ENCODE measurements at regions of chr3 and their contacts with region 1.

Region 1: GRCh38 chr3:30042274-30042859 is 564.0 kb upstream of the TGFBR2 start:
- DNase-seq: peak; percentile 57
- H3K4me3 ChIP-seq: no peak overlapping the region
- H3K27ac ChIP-seq: no peak overlapping the region
- H3K4me1 ChIP-seq: no peaks in the 10 kb centered on the region
- CTCF ChIP-seq: peak; percentile 83

Region 2: GRCh38 chr3:30073622-30074021 is 31.3 kb after region 1 on chr3:
- CTCF ChIA-PET with region 1: no interaction called
- POLR2A ChIA-PET with region 1: no interaction called
- intact Hi-C with region 1: no loop called
- DNase-seq: no peak
- H3K4me3 ChIP-seq: no peak overlapping the region
- H3K27ac ChIP-seq: no peak overlapping the region
- H3K4me1 ChIP-seq: no peaks in the 10 kb centered on the region
- CTCF ChIP-seq: no peak

Region 3: GRCh38 chr3:30199096-30199759 is 156.9 kb after region 1 on chr3:
- CTCF ChIA-PET with region 1: no interaction called
- POLR2A ChIA-PET with region 1: no interaction called
- intact Hi-C with region 1: loop called (anchors 5 kb)
- DNase-seq: peak; percentile 64
- H3K4me3 ChIP-seq: no peak overlapping the region
- H3K27ac ChIP-seq: no peak overlapping the region
- H3K4me1 ChIP-seq: no peaks in the 10 kb centered on the region
- CTCF ChIP-seq: peak; percentile 98

Region 4: GRCh38 chr3:30751610-30752299 is 709.4 kb after region 1 on chr3:
- CTCF ChIA-PET with region 1: no interaction called
- POLR2A ChIA-PET with region 1: no interaction called
- intact Hi-C with region 1: loop called (anchors 10 kb)
- DNase-seq: peak; percentile 55
- H3K4me3 ChIP-seq: no peak overlapping the region
- H3K27ac ChIP-seq: no peak overlapping the region
- H3K4me1 ChIP-seq: no peaks in the 10 kb centered on the region
- CTCF ChIP-seq: peak; percentile 82

Region 5: DNA sequence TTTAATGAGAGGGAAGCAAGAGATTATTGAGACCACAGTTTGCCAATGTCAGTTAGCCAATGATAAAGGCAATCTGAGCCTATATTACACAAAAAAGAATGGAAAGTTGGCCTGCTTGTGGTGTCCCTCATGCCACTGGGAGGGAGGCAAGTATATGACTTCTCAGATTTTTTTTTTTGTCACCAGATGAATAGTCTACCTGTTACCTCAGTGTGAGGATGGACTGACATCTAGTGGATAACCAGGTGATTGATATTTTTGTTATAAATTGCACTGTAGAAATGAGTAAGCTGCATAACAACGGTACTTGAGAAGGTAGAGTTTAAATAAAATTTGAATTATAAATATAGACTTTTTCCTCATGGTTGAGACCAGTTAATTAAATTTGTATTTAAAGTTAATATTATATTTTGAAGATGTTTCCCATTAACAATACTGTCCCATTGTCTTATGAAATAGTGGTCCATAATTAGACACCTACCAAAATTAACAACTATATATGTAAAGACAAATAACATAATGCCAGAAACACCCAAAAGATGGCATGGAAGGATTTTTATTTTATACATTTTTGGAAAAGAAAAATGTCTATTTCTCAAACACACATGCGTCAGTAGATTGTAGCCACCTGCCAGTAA is 1089.9 kb after region 1 on chr3:
- CTCF ChIA-PET with region 1: no interaction called
- POLR2A ChIA-PET with region 1: no interaction called
- intact Hi-C with region 1: loop called (anchors 5 kb)
- DNase-seq: peak; percentile 54
- H3K4me3 ChIP-seq: no peak overlapping the region
- H3K27ac ChIP-seq: no peak overlapping the region
- H3K4me1 ChIP-seq: no peaks in the 10 kb centered on the region
- CTCF ChIP-seq: peak; percentile 83